A673 (cell line): ENCODE measurements at regions of chr12 and their contacts with region 1.

Region 1: DNA sequence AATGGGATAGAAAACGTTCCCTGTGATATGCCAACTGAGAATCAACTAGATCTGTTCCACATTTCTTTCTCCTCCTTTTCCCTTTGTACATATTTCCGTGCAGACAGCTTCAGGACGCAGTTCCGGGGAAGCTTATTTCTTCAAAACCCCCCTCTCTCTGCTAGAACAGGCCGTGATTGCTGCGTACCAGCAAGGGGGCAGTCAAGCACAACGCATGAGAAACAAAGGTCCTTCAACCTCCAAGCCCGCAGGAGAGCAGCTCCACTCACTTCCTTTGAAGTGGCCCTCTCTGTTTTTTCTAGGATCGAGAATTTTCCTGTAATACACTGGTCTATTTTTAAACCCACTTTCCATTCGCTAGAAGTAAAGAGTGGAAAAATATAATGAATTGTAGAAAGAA is 80.8 kb downstream of the ZNF664 start:
- DNase-seq: peak; percentile 48
- H3K4me3 ChIP-seq: no peak overlapping the region
- H3K27ac ChIP-seq: no peak overlapping the region
- H3K4me1 ChIP-seq: no peaks in the 10 kb centered on the region
- H3K27me3 ChIP-seq: no peaks in the 10 kb centered on the region
- CTCF ChIP-seq: peak; percentile 66

Region 2: DNA sequence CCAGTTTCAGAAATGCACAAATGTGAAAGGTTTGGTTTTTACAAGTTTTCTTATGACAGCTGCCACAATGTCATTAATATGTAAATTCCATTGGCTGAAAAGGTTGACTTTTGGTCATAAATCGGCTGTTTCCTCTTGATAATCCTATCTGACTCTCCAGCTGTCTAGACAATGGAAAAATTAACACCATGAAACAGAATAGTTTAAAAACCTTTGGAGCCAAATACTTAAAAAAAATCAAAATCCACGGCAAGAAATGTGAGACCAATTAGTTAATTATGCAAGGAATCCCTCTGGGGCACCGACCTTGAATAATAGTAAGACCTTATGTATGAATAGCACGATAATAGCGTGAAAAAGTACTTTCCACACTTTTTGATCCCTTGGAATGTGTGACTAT is 57.2 kb after region 1 on chr12:
- CTCF ChIA-PET with region 1: interaction called, 10 read pairs
- POLR2A ChIA-PET with region 1: no interaction called
- intact Hi-C with region 1: no loop called
- DNase-seq: peak; percentile 54
- H3K4me3 ChIP-seq: no peak overlapping the region
- H3K27ac ChIP-seq: no peak overlapping the region
- H3K4me1 ChIP-seq: peaks cover 16% of the 10 kb centered on the region
- H3K27me3 ChIP-seq: no peaks in the 10 kb centered on the region
- CTCF ChIP-seq: no peak

Region 3: DNA sequence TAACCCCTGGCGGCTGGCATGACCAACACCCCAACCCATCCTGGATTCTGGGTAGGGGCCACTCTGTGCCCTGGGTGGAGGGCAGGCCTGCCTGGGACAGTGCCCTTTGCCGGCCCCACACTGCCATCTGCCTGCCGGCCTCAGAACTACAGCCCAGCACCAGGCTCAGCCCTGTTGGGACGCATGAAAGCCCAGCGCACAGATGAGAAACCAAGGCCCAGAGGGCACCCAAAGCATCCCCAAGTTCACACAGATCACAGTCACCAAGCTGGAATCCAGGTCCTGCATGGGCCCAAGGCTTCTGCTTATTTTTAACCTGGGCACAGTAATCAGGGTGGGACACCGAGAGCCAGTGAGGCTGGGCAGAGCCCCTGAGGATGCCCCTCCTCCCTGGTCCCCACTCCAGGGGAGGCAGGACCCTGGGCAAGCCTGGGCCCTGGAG is 267.2 kb after region 1 on chr12:
- CTCF ChIA-PET with region 1: no interaction called
- POLR2A ChIA-PET with region 1: no interaction called
- intact Hi-C with region 1: loop called (anchors 1 kb)
- DNase-seq: peak; percentile 56
- H3K4me3 ChIP-seq: no peak overlapping the region
- H3K27ac ChIP-seq: no peak overlapping the region
- H3K4me1 ChIP-seq: no peaks in the 10 kb centered on the region
- H3K27me3 ChIP-seq: no peaks in the 10 kb centered on the region
- CTCF ChIP-seq: peak; percentile 86